ENCODE measurements at regions of chr9 and their contacts with region 1.

Region 1: DNA sequence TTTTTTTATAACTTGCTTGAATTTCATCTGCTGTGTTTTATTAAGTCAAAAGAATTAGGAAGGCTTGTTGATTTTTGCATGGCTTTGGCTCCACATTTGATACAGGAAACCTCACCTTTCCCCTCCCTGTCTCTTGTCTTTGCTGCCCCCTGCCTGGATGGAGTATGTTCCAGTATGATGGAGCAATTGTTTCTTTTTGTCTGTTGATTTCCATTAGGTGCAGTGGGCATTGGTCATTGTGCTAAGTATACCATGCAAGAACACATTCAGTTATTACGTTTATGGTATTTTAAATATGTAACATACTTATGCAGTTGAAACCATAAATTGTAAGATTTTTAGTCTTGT is 19.6 kb downstream of the TJP2 start:
- DNase-seq: no peak
- H3K4me3 Mint-ChIP-seq: no peak overlapping the region
- H3K27ac Mint-ChIP-seq: no peak overlapping the region
- H3K4me1 Mint-ChIP-seq: no peaks in the 10 kb centered on the region
- H3K27me3 Mint-ChIP-seq: no peaks in the 10 kb centered on the region
- CTCF ChIP-seq: no peak

Region 2: DNA sequence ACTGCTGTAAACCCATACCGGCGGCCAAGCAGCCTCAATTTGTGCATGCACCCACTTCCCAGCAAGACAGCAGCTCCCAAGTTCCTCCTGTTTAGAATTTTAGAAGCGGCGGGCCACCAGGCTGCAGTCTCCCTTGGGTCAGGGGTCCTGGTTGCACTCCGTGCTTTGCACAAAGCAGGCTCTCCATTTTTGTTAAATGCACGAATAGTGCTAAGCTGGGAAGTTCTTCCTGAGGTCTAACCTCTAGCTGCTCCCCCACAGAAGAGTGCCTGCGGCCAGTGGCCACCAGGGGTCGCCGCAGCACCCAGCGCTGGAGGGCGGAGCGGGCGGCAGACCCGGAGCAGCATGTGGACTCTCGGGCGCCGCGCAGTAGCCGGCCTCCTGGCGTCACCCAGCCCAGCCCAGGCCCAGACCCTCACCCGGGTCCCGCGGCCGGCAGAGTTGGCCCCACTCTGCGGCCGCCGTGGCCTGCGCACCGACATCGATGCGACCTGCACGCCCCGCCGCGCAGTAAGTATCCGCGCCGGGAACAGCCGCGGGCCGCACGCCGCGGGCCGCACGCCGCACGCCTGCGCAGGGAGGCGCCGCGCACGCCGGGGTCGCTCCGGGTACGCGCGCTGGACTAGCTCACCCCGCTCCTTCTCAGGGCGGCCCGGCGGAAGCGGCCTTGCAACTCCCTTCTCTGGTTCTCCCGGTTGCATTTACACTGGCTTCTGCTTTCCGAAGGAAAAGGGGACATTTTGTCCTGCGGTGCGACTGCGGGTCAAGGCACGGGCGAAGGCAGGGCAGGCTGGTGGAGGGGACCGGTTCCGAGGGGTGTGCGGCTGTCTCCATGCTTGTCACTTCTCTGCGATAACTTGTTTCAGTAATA is 158.0 kb before region 1 on chr9 and contains the start of gene FXN:
- CTCF ChIA-PET with region 1: interaction called, 51 read pairs
- POLR2A ChIA-PET with region 1: interaction called, 6 read pairs
- intact Hi-C with region 1: loop called (anchors 1 kb)
- DNase-seq: peak; percentile 78
- H3K4me3 Mint-ChIP-seq: peak within 1 kb of the TSS; percentile 94
- H3K27ac Mint-ChIP-seq: peak within 1 kb of the TSS; percentile 92
- H3K4me1 Mint-ChIP-seq: peaks cover 6% of the 10 kb centered on the region
- H3K27me3 Mint-ChIP-seq: no peaks in the 10 kb centered on the region
- CTCF ChIP-seq: peak; percentile 91
- total RNA-seq, gene FXN: 18.4 and 31.6 TPM in 2 replicates

Region 3: GRCh38 chr9:69063839-69064238 is 129.8 kb before region 1 on chr9:
- CTCF ChIA-PET with region 1: interaction called, 481 read pairs
- POLR2A ChIA-PET with region 1: no interaction called
- intact Hi-C with region 1: no loop called
- DNase-seq: no peak
- H3K4me3 Mint-ChIP-seq: no peak overlapping the region
- H3K27ac Mint-ChIP-seq: no peak overlapping the region
- H3K4me1 Mint-ChIP-seq: no peaks in the 10 kb centered on the region
- H3K27me3 Mint-ChIP-seq: no peaks in the 10 kb centered on the region
- CTCF ChIP-seq: no peak

Region 4: GRCh38 chr9:69073103-69073502 is 120.6 kb before region 1 on chr9:
- CTCF ChIA-PET with region 1: interaction called, 11 read pairs
- POLR2A ChIA-PET with region 1: no interaction called
- intact Hi-C with region 1: no loop called
- DNase-seq: no peak
- H3K4me3 Mint-ChIP-seq: no peak overlapping the region
- H3K27ac Mint-ChIP-seq: no peak overlapping the region
- H3K4me1 Mint-ChIP-seq: peaks cover under 1% of the 10 kb centered on the region
- H3K27me3 Mint-ChIP-seq: no peaks in the 10 kb centered on the region
- CTCF ChIP-seq: no peak

Region 5: GRCh38 chr9:69155341-69156030 is 38.2 kb before region 1 on chr9:
- CTCF ChIA-PET with region 1: interaction called, 7 read pairs
- POLR2A ChIA-PET with region 1: interaction called, 4 read pairs
- intact Hi-C with region 1: loop called (anchors 2 kb)
- DNase-seq: no peak
- H3K4me3 Mint-ChIP-seq: no peak overlapping the region
- H3K27ac Mint-ChIP-seq: peak overlapping the region; percentile 73
- H3K4me1 Mint-ChIP-seq: peaks cover 10% of the 10 kb centered on the region
- H3K27me3 Mint-ChIP-seq: no peaks in the 10 kb centered on the region
- CTCF ChIP-seq: no peak

Region 6: GRCh38 chr9:69180670-69181069 is 13.0 kb before region 1 on chr9:
- CTCF ChIA-PET with region 1: interaction called, 81 read pairs
- POLR2A ChIA-PET with region 1: interaction called, 15 read pairs
- intact Hi-C with region 1: no loop called
- DNase-seq: peak; percentile 95
- H3K4me3 Mint-ChIP-seq: peak overlapping the region; percentile 51
- H3K27ac Mint-ChIP-seq: peak overlapping the region; percentile 82
- H3K4me1 Mint-ChIP-seq: peaks cover 42% of the 10 kb centered on the region
- H3K27me3 Mint-ChIP-seq: no peaks in the 10 kb centered on the region
- CTCF ChIP-seq: no peak

Region 7: GRCh38 chr9:69265891-69266290 is 72.2 kb after region 1 on chr9:
- CTCF ChIA-PET with region 1: no interaction called
- POLR2A ChIA-PET with region 1: no interaction called
- intact Hi-C with region 1: no loop called
- DNase-seq: no peak
- H3K4me3 Mint-ChIP-seq: no peak overlapping the region
- H3K27ac Mint-ChIP-seq: no peak overlapping the region
- H3K4me1 Mint-ChIP-seq: no peaks in the 10 kb centered on the region
- H3K27me3 Mint-ChIP-seq: no peaks in the 10 kb centered on the region
- CTCF ChIP-seq: no peak

Region 8: DNA sequence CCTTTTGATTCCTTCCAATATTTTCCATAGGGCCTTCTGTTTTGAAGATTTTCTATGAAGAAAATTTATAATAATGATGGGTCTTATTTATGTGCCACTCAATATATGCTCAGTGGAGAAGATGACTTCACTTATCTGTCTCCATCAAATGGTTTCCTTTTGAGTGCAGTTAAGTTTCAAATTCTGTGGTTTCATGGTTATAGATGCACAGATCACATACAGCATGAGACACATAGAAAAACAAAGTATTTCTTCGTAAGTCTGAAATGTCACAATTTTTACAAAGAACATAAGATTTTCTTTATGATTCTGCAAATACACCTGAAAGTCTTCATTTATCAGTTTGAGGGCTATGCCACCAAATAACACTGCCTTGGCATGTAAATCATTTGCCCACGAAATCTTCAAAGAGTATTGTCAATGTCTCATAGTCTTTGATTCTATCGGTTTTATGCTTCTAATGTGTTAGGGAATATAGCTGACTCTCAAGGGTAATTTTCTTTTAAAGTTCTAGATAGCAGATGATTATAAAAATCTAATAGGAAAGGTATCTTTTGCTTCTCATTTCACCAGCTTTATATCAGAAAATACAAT is 641.0 kb after region 1 on chr9:
- CTCF ChIA-PET with region 1: no interaction called
- POLR2A ChIA-PET with region 1: no interaction called
- intact Hi-C with region 1: no loop called
- DNase-seq: no peak
- H3K4me3 Mint-ChIP-seq: no peak overlapping the region
- H3K27ac Mint-ChIP-seq: no peak overlapping the region
- H3K4me1 Mint-ChIP-seq: no peaks in the 10 kb centered on the region
- H3K27me3 Mint-ChIP-seq: no peaks in the 10 kb centered on the region
- CTCF ChIP-seq: no peak

Measured in MCF 10A (cell line).